Activated CD8-positive, alpha-beta T cell treated with anti-CD3 and anti-CD28 coated beads for 36 hours (primary cell): ENCODE measurements at regions of chr9 and their contacts with region 1.

Region 1: DNA sequence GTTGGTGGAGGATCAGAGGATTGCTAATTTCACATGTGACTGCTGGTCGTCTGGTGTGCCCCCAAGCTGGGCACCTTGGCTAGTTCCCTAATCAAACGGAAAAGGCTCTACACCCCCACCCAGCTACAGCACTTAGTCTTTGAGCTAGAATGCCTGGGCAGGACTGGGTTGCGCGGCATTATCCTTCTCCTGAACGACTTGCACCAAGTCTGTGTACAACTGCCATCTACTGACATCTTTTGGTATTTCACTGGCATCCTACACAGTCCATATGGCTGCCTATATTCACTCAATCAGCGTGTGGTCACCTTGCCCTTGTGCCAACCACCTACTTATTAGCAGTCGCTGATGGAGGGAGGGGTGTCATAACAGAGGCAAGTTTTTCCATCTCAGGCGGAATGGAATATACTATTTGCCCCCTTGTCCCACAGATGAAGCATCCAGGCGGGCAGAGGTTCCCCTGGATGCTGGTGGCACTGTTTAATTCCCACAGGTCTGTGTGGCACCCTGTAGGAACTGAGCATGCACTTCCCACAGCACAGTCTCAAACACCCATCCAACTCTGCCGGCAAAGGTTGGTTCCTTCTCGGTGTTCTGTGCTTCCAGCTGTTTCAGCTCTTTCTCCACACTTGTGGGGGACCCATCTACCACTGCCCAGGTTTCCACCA is 150.1 kb downstream of the OSTF1 start:
- DNase-seq: peak; percentile 64
- ATAC-seq: peak; percentile 99
- H3K4me3 Mint-ChIP-seq: no peak overlapping the region
- H3K27ac Mint-ChIP-seq: no peak overlapping the region
- H3K4me1 Mint-ChIP-seq: no peaks in the 10 kb centered on the region
- H3K27me3 Mint-ChIP-seq: no peaks in the 10 kb centered on the region
- CTCF ChIP-seq: peak; percentile 59

Region 2: GRCh38 chr9:75200892-75201470 is 37.5 kb before region 1 on chr9:
- CTCF ChIA-PET with region 1: interaction called, 16 read pairs
- POLR2A ChIA-PET with region 1: interaction called, 3 read pairs
- intact Hi-C with region 1: loop called (anchors 1 kb)
- DNase-seq: peak; percentile 19
- ATAC-seq: peak; percentile 70
- H3K4me3 Mint-ChIP-seq: no peak overlapping the region
- H3K27ac Mint-ChIP-seq: peak overlapping the region; percentile 36
- H3K4me1 Mint-ChIP-seq: peaks cover 6% of the 10 kb centered on the region
- H3K27me3 Mint-ChIP-seq: no peaks in the 10 kb centered on the region
- CTCF ChIP-seq: peak; percentile 78